ENCODE measurements at regions of chr6 and their contacts with region 1.

Region 1: GRCh38 chr6:158737710-158738615 is 81.2 kb downstream of the EZR start:
- DNase-seq: no peak
- ATAC-seq: no peak
- H3K4me3 ChIP-seq: no peak overlapping the region
- H3K27ac ChIP-seq: no peak overlapping the region
- H3K4me1 ChIP-seq: no peaks in the 10 kb centered on the region
- H3K27me3 ChIP-seq: no peaks in the 10 kb centered on the region
- CTCF ChIP-seq: no peak
- EP300 ChIP-seq: no peak
- POLR2A ChIP-seq: no peak
- RAD21 ChIP-seq: no peak

Region 2: DNA sequence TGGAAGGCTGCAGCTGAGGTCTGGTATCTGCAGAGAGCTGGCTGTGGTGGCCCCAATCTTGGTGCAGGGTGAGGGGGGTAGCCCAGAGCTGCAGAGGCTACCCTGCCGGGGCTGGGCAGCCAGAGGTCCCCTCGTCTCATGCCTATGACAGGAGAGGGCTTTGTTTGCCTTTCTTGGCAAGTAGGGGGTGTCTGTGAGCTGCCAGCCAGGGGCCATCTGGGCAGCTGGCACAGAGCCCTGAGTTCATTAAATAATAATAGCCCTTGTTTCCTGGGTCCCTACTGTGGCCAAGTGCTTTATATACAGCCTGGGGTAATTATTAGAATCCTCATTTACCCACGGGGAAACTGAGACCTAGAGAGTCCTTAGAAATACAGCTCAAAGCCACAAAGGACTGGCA is 14.7 kb after region 1 on chr6:
- CTCF ChIA-PET with region 1: interaction called, 4 read pairs
- POLR2A ChIA-PET with region 1: interaction called, 12 read pairs
- RAD21 ChIA-PET with region 1: interaction called, 3 read pairs
- SMC1A ChIA-PET with region 1: interaction called, 8 read pairs
- in situ Hi-C with region 1: no loop called
- intact Hi-C with region 1: no loop called
- DNase-seq: no peak
- ATAC-seq: peak; percentile 78
- H3K4me3 ChIP-seq: no peak overlapping the region
- H3K27ac ChIP-seq: no peak overlapping the region
- H3K4me1 ChIP-seq: no peaks in the 10 kb centered on the region; the same call in 1 of the 2 replicates
- H3K27me3 ChIP-seq: no peaks in the 10 kb centered on the region
- CTCF ChIP-seq: peak in 2 of 3 experiments; percentile 21 to 22; a peak in 2 of 6 replicates
- EP300 ChIP-seq: no peak
- POLR2A ChIP-seq: no peak
- RAD21 ChIP-seq: no peak

Region 3: DNA sequence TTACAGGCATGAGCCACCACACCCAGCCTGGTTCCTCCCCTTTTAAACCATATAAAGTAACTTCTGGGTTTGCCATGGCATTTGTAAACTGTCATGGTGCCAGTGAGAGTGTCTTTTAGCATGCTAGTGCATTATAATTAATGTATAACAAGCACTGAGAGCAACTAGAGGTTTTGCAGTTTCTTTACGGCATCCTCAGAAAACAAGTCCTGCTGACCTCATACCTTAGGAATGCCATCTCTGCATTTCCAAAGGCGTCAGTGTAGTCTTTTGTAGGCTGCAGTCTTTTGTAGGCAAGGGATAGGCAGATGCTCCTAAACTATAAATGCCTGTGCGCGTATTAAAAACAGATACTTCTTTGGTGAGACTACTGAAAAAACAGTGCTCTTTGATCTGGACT is 156.2 kb after region 1 on chr6:
- CTCF ChIA-PET with region 1: no interaction called
- POLR2A ChIA-PET with region 1: no interaction called
- RAD21 ChIA-PET with region 1: no interaction called
- SMC1A ChIA-PET with region 1: no interaction called
- in situ Hi-C with region 1: no loop called
- intact Hi-C with region 1: no loop called
- DNase-seq: no peak
- ATAC-seq: no peak
- H3K4me3 ChIP-seq: no peak overlapping the region
- H3K27ac ChIP-seq: no peak overlapping the region
- H3K4me1 ChIP-seq: no peaks in the 10 kb centered on the region
- H3K27me3 ChIP-seq: no peaks in the 10 kb centered on the region
- CTCF ChIP-seq: no peak
- EP300 ChIP-seq: no peak
- POLR2A ChIP-seq: no peak
- RAD21 ChIP-seq: no peak